Mucosa of descending colon (tissue), 3 donors: ENCODE measurements at regions of chr12 and their contacts with region 1.

Region 1: DNA sequence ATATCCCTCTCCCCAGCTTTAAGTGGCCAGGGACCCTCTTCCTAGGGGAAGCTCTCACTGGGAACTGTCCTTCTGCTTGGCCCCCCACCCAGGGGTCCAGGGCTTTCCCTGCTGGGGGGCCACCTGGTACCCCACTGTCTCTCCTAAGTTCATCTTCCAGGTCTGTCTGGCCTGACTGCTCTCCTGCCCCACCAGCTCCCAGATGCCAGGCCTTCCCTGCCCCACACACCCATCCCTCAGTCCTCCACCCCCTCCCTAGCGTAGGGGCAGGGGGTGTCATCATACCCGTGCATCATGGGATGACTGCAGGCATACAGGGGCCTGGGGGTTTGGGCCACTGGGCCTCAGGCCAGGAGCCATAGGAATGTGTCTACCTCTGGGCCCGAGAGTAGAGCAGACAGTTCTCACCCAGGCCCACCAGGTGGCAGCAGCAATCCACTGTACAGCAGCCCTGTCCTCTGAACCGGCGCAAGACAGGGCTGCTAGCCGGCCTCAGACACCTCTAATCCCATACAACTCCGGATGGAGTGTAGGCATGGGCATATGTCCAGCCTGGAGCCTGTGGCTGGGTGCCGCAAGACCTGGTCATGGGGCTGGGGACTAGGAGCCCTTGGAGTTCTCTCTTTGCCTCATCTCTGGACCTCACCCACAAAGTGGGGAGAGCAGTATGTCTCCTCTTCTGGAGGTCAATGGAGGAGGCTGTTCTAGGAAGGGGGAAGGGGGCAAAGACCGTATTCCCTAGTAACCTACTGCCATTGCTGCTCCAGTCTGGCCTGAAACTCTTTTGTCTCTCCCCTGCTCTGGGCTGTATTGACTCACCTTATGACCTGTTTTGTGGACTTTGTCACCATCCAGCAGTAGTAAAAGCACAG is 10.0 kb upstream of the SMARCD1 start:
- DNase-seq: peak; percentile 85 to 92 (median 89)
- ATAC-seq: peak; percentile 93
- H3K4me3 ChIP-seq: no peak overlapping the region
- H3K4me1 ChIP-seq: peaks cover 14% of the 10 kb centered on the region
- CTCF ChIP-seq: peak; percentile 88

Region 2: DNA sequence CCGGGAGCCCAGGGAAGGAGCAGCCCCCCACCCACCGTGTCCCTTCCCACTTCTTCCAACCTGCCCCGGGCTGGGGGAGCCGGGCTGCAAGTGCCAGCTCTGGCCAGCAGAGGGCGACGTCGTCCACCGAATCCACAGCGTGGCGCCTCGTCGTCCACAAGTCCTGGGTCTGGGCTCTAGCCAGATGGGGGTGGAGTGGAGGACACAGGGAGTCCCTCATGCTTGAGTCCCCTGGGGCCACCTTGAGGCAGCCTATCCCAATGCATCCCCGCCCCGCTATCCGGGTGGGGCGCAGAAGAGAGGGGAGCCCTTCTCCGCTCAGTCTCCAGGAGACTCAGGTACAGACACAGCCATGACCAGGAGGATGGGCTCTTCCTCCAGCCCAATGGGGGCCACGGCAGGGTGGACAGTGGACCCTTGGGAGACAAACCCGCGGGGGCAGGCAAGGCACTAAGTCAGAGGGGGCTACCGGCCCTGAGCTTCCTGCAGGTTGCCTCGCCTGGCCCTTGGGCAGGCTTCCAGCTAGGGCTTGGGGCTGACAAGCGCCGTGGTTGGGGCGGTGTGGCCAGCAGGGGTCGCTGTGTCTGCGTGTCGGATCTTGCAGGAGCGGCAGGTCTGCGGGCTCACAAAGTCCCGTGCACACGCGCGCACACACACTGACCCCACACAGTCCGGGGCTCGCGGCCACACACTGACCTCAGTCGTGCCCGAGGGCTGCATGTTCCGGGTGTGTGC is 108.0 kb before region 1 on chr12:
- intact Hi-C with region 1: loop called (anchors 5 kb)
- DNase-seq: peak; percentile 91 to 96 (median 94)
- ATAC-seq: peak; percentile 92
- H3K4me3 ChIP-seq: no peak overlapping the region
- H3K4me1 ChIP-seq: peaks cover 3% of the 10 kb centered on the region
- CTCF ChIP-seq: peak; percentile 89

Region 3: GRCh38 chr12:50174971-50175715 is 100.0 kb after region 1 on chr12:
- intact Hi-C with region 1: loop called (anchors 10 kb)
- DNase-seq: peak in 1 of 3 donors; percentile 50
- ATAC-seq: peak; percentile 54
- H3K4me3 ChIP-seq: no peak overlapping the region
- H3K4me1 ChIP-seq: no peaks in the 10 kb centered on the region
- CTCF ChIP-seq: no peak